HepG2 (cell line): ENCODE measurements at regions of chr19 and their contacts with region 1.

Region 1: DNA sequence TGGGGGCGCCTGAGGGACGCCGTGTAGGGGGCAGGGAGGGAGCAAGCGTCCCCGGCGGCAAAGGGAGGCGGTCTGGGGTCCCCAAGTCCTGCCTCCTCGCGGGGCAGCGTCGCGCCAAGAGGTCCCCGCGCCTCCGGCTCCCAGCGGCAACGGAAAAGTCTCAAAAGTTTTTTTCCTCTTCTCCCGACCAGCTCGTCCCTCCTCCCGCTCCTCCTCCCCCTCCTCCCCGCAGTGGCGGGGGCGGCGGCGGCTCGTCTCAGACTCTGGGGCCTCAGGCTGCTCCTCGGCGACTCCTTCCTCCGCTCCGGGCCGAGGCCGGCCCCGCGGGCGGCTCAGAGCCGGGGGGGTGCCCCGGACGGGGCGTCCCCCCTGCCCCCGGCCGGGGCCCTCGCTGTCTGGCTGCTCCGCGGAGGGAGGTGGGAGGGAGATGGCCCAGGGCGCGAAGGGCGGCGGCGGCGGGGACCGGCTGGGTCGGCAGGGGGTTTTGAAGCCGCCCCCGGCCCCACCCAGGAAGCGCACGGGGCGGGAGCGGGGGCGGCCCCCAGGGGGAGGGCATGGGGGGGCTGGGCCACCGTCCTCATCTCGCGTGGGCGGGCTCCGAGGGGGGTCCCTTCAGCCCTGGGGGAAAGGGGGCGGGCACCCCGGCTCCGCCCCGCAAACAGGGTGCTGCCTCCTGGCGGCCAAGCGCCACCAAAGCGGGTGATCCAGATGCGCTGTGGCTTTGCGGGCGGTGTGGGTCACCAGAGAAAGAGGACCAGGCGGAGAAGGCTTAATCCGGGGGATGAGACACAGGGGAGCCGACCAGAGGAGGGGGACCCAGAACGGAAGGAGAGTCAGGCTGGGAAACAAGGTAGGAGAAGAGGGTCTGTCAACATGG is at the start of gene TGFB1:
- DNase-seq: peak; percentile 70
- ATAC-seq: peak; percentile 69
- H3K4me3 ChIP-seq: peak within 1 kb of the TSS; percentile 90 to 95 (median 95)
- H3K27ac ChIP-seq: peak within 1 kb of the TSS; percentile 60
- H3K4me1 ChIP-seq: peaks cover 32% of the 10 kb centered on the region
- H3K27me3 ChIP-seq: no peaks in the 10 kb centered on the region; a peak in 2 of 5 replicates
- CTCF ChIP-seq: peak; percentile 93
- EP300 ChIP-seq: no peak
- POLR2A ChIP-seq: peak in 1 of 2 experiments; percentile 61; a peak in 1 of 4 replicates
- RAD21 ChIP-seq: peak; percentile 29; the same call in 1 of the 2 replicates
- total RNA-seq, gene TGFB1: 2.7 and 4.1 TPM in 2 replicates

Region 2: DNA sequence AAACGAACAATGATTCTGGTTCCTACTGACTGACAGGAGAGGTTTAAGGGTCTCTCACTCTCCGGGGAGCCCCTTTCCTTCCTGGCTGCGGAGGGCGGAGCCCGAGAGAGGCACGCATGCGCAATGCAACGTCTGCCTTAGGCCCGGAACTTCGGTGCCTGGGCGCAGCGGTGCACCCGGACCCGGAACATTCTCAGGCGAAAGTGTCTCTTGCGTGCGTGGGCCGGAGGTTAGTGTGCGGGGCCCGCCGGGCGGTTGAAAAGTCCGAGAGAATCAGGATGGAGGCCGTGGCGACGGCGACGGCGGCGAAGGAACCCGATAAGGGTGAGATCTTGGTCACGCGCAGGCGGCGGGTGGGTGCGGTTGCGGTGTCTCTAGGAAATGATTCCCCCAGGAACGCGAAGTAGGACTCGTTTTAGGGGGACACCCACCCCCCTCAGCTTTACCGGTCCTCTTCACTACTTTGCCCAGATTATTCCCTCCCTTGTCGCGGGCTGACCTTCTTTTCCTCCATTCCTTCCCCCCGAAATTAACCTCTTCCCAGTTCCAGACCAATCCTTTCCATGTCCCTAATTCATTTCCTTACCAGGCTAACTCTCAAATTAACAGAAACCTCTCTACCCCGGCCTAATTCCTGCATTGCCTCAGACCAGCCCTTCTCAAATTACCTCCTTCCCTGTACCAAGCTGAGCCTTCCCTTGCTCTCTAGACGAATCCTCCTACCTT is 43.5 kb before region 1 on chr19 and contains the start of gene CCDC97:
- CTCF ChIA-PET with region 1: interaction called, 6 read pairs
- POLR2A ChIA-PET with region 1: interaction called, 9 read pairs
- in situ Hi-C with region 1: loop called (anchors 5 kb)
- intact Hi-C with region 1: no loop called
- DNase-seq: peak; percentile 75
- ATAC-seq: peak; percentile 69
- H3K4me3 ChIP-seq: peak within 1 kb of the TSS; percentile 72 to 90 (median 85)
- H3K27ac ChIP-seq: peak within 1 kb of the TSS; percentile 91
- H3K4me1 ChIP-seq: peaks cover 28% of the 10 kb centered on the region
- H3K27me3 ChIP-seq: no peaks in the 10 kb centered on the region
- CTCF ChIP-seq: no peak; the same call in 1 of the 2 replicates
- EP300 ChIP-seq: peak in 1 of 2 experiments; percentile 37; a peak in 1 of 4 replicates
- POLR2A ChIP-seq: peak; percentile 74 to 78
- RAD21 ChIP-seq: peak; percentile 24; the same call in 1 of the 2 replicates
- total RNA-seq, gene CCDC97: 7.1 and 7.3 TPM in 2 replicates

Region 3: DNA sequence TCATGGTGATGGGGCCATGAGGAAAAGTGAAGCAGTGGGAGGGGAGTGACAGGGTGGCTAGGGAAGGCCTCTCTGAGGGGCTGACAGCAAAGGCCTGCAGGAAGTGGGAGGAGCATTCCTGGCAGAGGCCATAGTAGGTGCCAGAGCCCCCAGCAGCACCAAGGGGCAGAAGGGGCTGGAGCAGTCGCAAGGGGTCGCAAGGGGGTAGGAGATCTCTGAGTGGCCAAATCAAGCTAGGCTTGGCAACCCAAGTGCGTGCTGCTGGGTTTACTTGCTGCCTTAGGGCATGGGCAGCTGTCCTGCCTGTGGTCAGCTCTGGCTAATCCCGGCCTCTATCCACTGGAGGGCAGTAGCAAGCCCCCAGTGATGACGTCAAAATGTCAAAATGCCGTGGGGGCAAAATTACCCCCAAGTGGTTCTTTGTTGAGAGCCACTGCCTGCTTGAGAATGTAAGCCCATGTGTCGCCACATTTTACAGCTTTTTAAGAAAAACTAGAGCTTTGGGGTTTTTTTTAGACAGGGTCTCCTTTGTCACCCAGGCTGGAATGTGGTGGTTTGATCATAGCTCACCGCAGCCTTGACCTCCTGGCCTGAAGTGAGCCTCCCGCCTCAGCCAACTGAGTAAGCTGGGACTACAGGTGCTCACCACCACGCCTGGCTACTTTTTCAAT is 32.0 kb before region 1 on chr19:
- CTCF ChIA-PET with region 1: interaction called, 12 read pairs
- POLR2A ChIA-PET with region 1: interaction called, 73 read pairs
- in situ Hi-C with region 1: no loop called
- intact Hi-C with region 1: loop called (anchors 2 kb)
- DNase-seq: peak; percentile 82
- ATAC-seq: peak; percentile 33
- H3K4me3 ChIP-seq: no peak overlapping the region
- H3K27ac ChIP-seq: peak overlapping the region; percentile 74
- H3K4me1 ChIP-seq: peaks cover 71% of the 10 kb centered on the region
- H3K27me3 ChIP-seq: no peaks in the 10 kb centered on the region
- CTCF ChIP-seq: peak; percentile 80
- EP300 ChIP-seq: peak; percentile 56 to 63; a peak in 3 of 4 replicates
- POLR2A ChIP-seq: no peak
- RAD21 ChIP-seq: peak; percentile 63; the same call in 1 of the 2 replicates

Region 4: DNA sequence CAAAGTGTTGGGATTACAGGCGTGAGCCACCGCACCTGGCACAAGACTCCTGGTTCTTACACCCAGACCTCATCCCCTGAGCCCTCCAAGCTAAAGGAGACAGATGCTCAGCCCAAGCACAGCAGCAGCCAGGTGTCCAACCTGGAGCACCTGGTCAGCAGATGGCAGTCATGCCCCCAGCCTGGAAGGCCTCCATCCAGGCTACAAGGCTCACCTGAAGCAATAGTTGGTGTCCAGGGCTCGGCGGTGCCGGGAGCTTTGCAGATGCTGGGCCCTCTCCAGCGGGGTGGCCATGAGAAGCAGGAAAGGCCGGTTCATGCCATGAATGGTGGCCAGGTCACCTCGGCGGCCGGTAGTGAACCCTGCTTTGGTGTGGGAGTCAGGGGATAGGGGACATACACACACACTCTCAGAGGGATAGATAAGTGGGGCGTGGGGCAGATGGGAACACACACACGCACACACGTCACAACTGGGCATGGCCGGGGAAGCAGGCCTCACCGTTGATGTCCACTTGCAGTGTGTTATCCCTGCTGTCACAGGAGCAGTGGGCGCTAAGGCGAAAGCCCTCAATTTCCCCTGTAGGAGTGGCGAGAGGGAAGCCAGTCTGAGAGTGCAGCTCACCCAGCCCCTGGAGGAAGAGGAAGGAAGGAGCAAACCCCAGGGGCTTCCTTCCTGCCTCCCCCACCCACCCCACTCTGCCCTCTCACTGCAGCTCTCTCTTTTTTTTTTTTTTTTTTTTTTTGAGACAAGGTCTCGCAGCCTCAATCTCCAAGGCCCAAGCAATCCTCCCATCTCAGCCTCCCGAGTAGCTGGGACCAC is 11.8 kb before region 1 on chr19:
- CTCF ChIA-PET with region 1: no interaction called
- POLR2A ChIA-PET with region 1: no interaction called
- in situ Hi-C with region 1: no loop called
- intact Hi-C with region 1: loop called (anchors 1 kb)
- DNase-seq: no peak
- ATAC-seq: no peak; the same call in 1 of the 3 replicates
- H3K4me3 ChIP-seq: no peak overlapping the region
- H3K27ac ChIP-seq: no peak overlapping the region
- H3K4me1 ChIP-seq: no peaks in the 10 kb centered on the region
- H3K27me3 ChIP-seq: no peaks in the 10 kb centered on the region
- CTCF ChIP-seq: peak; percentile 41
- EP300 ChIP-seq: no peak
- POLR2A ChIP-seq: no peak
- RAD21 ChIP-seq: no peak

Region 5: DNA sequence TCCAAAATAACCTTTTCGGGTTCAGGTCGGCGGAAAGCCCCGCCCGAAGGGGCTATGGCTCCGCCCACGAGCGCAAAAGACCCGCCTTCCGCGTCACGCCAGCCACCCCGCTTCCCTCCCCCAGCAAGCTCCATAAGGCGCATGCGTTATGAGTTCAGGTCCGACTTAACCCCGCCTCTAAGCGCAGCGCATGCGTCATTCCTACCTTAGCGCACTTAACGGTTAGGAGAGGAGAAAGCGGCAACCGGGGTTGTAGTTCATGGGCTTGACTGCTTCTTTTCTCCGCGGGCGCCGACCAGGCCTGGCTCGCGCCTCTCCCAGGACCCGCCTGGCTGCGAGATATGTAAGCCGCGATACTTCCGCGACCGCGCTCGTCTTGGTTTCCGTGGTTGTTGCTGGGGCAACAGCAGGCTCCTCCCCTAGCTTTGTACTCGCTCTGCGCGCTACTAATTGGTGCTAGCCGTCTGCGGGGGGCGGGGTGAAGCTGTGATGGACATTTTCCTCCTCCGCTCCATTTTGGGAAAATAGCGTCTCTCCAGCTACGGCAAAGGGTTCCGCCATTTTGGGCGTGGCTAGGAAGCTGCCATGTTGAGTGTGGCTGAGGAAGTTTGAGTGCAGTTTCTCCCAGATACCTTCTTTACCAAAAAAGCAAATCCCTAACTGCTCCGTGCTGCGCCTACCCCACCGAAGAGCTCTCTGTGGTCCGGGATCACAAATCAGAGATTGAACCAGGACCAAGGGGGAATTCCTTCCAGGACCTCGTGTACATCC is 10.2 kb after region 1 on chr19 and contains the start of gene B9D2:
- CTCF ChIA-PET with region 1: no interaction called
- POLR2A ChIA-PET with region 1: interaction called, 41 read pairs
- in situ Hi-C with region 1: no loop called
- intact Hi-C with region 1: no loop called
- DNase-seq: peak; percentile 96
- ATAC-seq: peak; percentile 95
- H3K4me3 ChIP-seq: peak within 1 kb of the TSS; percentile 70 to 87 (median 84)
- H3K27ac ChIP-seq: peak within 1 kb of the TSS; percentile 95
- H3K4me1 ChIP-seq: peaks cover 50% of the 10 kb centered on the region
- H3K27me3 ChIP-seq: no peaks in the 10 kb centered on the region; a peak in 2 of 5 replicates
- CTCF ChIP-seq: no peak
- EP300 ChIP-seq: peak in 1 of 2 experiments; percentile 42; a peak in 1 of 4 replicates
- POLR2A ChIP-seq: peak; percentile 65 to 91; a peak in 3 of 4 replicates
- RAD21 ChIP-seq: no peak
- total RNA-seq, gene B9D2: 4.4 and 5.3 TPM in 2 replicates

Region 6: DNA sequence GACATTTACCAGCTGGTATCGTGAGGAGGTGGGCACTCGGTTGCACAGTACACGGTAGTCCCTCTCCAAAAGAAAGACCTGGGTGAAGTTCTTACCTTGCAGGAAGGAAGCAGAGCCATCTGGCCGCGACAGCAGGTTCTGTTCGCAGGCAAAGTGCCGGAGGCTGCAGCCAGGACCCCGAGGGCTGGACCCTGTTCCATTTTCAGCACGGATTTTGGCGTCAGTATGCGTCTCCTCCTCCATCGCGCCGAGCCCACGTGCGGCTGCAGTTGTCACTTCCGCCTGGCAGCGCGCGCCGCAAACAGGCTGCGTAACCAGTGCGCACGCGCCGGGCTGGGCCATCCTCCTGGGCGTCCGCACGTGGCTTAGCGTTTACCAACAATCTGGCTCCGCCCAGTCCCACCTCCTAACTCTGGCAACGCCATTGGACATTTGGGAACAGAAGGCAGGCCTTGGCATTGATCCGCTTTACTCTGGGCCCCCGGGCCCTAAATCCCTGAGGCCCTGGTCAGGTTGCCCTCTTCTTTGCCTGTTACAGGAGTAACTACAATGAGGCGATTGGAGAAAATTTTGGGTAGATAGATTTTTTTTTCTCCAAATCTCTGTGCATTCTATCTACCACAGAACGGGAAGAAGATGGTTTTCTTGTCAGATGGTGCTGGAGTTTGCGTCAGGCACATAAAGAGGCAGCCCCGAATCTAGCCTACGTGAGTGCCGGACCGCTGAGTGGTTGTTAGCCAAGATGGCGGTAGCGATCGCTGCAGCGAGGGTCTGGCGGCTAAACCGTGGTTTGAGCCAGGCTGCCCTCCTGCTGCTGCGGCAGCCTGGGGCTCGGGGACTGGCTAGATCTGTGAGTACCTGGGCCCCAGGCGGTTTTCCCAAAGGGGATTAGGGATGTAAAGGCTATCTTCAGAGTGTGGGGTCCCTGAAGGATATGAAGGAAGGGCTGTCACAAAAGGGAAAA is 43.7 kb after region 1 on chr19 and contains the starts of genes BCKDHA and EXOSC5:
- CTCF ChIA-PET with region 1: no interaction called
- POLR2A ChIA-PET with region 1: no interaction called
- in situ Hi-C with region 1: no loop called
- intact Hi-C with region 1: no loop called
- DNase-seq: peak; percentile 99
- ATAC-seq: peak; percentile 94
- H3K4me3 ChIP-seq: peak within 1 kb of the TSS; percentile 86 to 94 (median 90)
- H3K27ac ChIP-seq: peak within 1 kb of the TSS; percentile 94
- H3K4me1 ChIP-seq: peaks cover 30% of the 10 kb centered on the region
- H3K27me3 ChIP-seq: no peaks in the 10 kb centered on the region; a peak in 1 of 5 replicates
- CTCF ChIP-seq: no peak
- EP300 ChIP-seq: no peak
- POLR2A ChIP-seq: peak; percentile 65 to 70
- RAD21 ChIP-seq: 0 out of 2 replicates have a peak, but pooled peaks have one; percentile 16
- total RNA-seq, gene BCKDHA: 9.7 and 11.8 TPM in 2 replicates
- total RNA-seq, gene EXOSC5: 23.6 and 24.1 TPM in 2 replicates

Region 7: DNA sequence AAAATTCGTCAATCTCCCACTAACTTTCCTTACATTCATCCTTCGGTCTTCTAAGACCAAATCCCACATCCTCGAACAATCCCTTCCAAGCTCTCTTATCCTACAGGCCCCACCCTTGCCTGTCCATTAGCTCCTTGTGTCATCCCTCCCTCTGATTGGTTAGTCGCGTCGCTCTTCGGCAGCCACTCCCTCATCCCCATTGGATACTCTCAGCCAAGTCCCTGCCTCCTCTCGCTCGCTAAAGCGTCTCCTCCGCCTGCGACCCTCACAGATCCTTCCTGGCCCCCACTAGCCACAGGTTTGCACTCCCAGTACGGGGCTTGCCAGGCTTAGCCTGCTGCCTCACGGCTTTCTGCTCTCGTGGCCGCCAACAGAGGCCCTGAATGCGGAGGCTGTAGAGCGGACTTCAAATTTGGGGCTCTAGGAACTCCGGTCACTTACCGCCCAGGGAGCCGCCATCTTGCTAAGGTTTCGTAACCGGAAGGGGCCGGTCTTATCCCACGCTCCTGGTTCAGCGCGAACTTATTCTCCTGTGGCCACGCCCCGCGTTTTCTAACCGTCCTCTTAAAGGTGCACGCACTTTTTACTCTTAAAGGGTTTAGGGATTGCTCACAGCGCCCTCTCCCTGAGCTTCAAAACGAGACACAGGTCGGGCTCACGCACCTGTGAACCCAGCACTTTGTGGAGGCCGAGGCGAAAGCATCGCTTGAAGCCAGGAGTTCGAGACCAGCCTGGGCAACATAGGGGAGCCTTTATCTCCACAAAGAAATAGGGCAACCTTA is 85.9 kb after region 1 on chr19 and contains the start of gene DMAC2:
- CTCF ChIA-PET with region 1: no interaction called
- POLR2A ChIA-PET with region 1: interaction called, 14 read pairs
- in situ Hi-C with region 1: no loop called
- intact Hi-C with region 1: no loop called
- DNase-seq: peak; percentile 98
- ATAC-seq: peak; percentile 94
- H3K4me3 ChIP-seq: peak within 1 kb of the TSS; percentile 71 to 94 (median 77)
- H3K27ac ChIP-seq: peak within 1 kb of the TSS; percentile 95
- H3K4me1 ChIP-seq: peaks cover 45% of the 10 kb centered on the region
- H3K27me3 ChIP-seq: no peaks in the 10 kb centered on the region
- CTCF ChIP-seq: peak; percentile 83
- EP300 ChIP-seq: no peak
- POLR2A ChIP-seq: peak; percentile 84 to 91
- RAD21 ChIP-seq: peak; percentile 28; the same call in 1 of the 2 replicates
- total RNA-seq, gene DMAC2: 39.0 and 51.9 TPM in 2 replicates